Activated CD4-positive, alpha-beta T cell treated with anti-CD3 and anti-CD28 coated beads for 36 hours (primary cell): ENCODE measurements at regions of chr19 and their contacts with region 1.

Region 1: GRCh38 chr19:796692-797527 is at the start of gene PTBP1:
- DNase-seq: peak; percentile 100
- ATAC-seq: peak; percentile 86
- H3K4me3 Mint-ChIP-seq: peak within 1 kb of the TSS; percentile 93
- H3K27ac Mint-ChIP-seq: peak within 1 kb of the TSS; percentile 95
- H3K4me1 Mint-ChIP-seq: peaks cover 25% of the 10 kb centered on the region
- H3K27me3 Mint-ChIP-seq: no peaks in the 10 kb centered on the region
- total RNA-seq, gene PTBP1: 584 to 738 TPM

Region 2: DNA sequence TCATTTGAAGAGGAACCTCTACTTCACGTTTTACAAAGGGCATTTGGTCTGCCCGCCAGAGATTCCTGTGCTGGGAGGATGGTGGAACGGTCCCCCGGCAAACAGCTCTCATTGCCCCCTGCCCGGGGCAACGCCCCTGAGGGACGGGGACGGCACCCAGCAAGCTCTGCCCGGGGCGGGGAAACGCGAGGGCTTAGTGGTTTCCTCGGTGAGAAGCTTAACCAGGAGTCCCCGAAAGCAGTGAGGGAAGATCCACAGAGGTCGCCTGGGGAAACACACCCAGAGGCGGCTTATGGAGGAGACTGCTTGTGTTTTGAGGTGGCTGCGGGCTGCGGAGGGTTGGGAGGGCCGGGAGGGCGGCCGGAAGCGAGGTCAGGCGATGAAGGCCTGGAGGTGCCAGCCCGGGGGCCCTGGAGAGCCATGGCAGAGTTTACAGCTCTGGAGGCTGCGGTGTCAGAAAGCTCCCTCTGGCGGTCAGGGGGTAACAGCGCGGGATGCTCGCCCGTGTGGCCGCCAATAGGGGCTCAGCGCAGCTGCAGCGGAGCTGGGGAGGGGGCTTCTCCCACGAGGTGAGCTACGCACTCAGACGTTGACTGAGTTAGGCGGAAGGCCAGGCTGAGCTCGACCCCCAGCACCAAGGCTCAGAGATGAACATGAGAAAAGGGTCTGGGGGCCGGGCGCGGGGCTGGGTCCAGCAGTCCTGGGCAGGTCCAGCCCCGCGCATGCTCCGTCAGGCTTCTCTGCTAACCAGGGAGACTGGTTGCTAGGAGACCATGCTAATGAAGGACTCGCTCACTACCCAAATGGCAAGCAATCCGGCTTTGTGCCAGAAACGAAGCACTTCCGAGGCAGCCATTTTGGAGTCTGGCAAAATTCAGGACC is 290.3 kb before region 1 on chr19:
- CTCF ChIA-PET with region 1: no interaction called
- POLR2A ChIA-PET with region 1: no interaction called
- intact Hi-C with region 1: loop called in 1 of 2 experiments (anchors 1 kb)
- DNase-seq: peak; percentile 97
- ATAC-seq: peak; percentile 72
- H3K4me3 Mint-ChIP-seq: peak overlapping the region; percentile 95
- H3K27ac Mint-ChIP-seq: peak overlapping the region; percentile 100
- H3K4me1 Mint-ChIP-seq: peaks cover 41% of the 10 kb centered on the region
- H3K27me3 Mint-ChIP-seq: no peaks in the 10 kb centered on the region

Region 3: GRCh38 chr19:639253-640160 is 157.4 kb before region 1 on chr19 and contains the start of gene FGF22:
- CTCF ChIA-PET with region 1: no interaction called
- POLR2A ChIA-PET with region 1: no interaction called
- intact Hi-C with region 1: loop called in 1 of 2 experiments (anchors 1 kb)
- DNase-seq: peak; percentile 98
- ATAC-seq: peak; percentile 97
- H3K4me3 Mint-ChIP-seq: peak within 1 kb of the TSS; percentile 70
- H3K27ac Mint-ChIP-seq: peak within 1 kb of the TSS; percentile 64
- H3K4me1 Mint-ChIP-seq: peaks cover 6% of the 10 kb centered on the region
- H3K27me3 Mint-ChIP-seq: peaks cover 2% of the 10 kb centered on the region
- total RNA-seq, gene FGF22: not detected

Region 4: DNA sequence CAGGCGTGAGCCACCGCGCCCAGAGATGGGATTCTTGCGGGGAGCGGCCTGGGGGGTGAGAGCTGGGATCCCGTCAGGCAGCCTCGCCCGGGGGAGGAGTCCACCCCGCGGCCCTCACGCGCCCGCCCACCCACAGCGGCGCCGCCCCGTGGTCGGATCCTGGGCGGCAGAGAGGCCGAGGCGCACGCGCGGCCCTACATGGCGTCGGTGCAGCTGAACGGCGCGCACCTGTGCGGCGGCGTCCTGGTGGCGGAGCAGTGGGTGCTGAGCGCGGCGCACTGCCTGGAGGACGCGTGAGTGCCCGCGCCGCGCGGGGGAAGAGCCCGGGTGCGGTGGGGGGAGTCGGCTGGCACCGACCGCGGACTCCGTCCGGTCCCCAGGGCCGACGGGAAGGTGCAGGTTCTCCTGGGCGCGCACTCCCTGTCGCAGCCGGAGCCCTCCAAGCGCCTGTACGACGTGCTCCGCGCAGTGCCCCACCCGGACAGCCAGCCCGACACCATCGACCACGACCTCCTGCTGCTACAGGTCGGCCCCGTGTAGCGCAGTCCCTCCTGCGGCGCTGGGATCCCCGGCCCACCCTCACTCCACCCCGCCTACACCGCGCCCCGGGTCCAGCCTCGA is 63.7 kb after region 1 on chr19:
- CTCF ChIA-PET with region 1: no interaction called
- POLR2A ChIA-PET with region 1: no interaction called
- intact Hi-C with region 1: loop called in 1 of 2 experiments (anchors 1 kb)
- DNase-seq: peak; percentile 73
- ATAC-seq: peak; percentile 17
- H3K4me3 Mint-ChIP-seq: no peak overlapping the region
- H3K27ac Mint-ChIP-seq: no peak overlapping the region
- H3K4me1 Mint-ChIP-seq: peaks cover 13% of the 10 kb centered on the region
- H3K27me3 Mint-ChIP-seq: peaks cover 13% of the 10 kb centered on the region

Region 5: GRCh38 chr19:1020868-1021425 is 224.0 kb after region 1 on chr19 and contains the start of gene TMEM259:
- CTCF ChIA-PET with region 1: no interaction called
- POLR2A ChIA-PET with region 1: no interaction called
- intact Hi-C with region 1: loop called in 1 of 2 experiments (anchors 1 kb)
- DNase-seq: peak; percentile 99
- ATAC-seq: peak; percentile 90
- H3K4me3 Mint-ChIP-seq: peak within 1 kb of the TSS; percentile 94
- H3K27ac Mint-ChIP-seq: peak within 1 kb of the TSS; percentile 96
- H3K4me1 Mint-ChIP-seq: peaks cover 35% of the 10 kb centered on the region
- H3K27me3 Mint-ChIP-seq: no peaks in the 10 kb centered on the region
- total RNA-seq, gene TMEM259: 106 to 128 TPM

Region 6: DNA sequence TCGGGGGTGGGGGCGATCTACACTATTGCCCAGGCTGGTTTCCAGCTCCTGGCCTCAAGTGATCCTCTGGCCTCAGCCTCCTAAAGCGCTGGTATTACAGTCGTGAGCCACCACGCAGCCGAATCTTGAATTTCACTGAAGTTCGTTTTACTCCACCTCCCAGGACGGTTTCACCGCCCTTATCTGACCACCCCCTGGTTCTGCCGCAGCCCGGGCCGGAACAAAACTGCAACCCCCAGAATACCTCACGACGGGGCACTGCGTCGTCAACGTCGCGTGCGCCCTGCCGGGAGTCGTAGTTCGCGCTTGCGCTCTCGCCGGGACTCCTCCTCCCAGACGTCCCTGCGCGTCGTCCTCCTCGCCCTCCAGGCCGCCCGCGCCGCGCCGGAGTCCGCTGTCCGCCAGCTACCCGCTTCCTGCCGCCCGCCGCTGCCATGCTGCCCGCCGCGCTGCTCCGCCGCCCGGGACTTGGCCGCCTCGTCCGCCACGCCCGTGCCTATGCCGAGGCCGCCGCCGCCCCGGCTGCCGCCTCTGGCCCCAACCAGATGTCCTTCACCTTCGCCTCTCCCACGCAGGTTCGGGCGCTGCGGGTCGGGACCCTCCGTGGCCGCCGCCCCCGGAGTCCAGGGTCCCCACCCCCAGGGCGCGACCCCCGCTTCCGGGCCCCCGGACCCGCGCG is 444.6 kb after region 1 on chr19 and contains the start of gene ATP5F1D:
- CTCF ChIA-PET with region 1: no interaction called
- POLR2A ChIA-PET with region 1: no interaction called
- intact Hi-C with region 1: loop called in 1 of 2 experiments (anchors 1 kb)
- DNase-seq: peak; percentile 96
- ATAC-seq: peak; percentile 79
- H3K4me3 Mint-ChIP-seq: peak within 1 kb of the TSS; percentile 83
- H3K27ac Mint-ChIP-seq: peak within 1 kb of the TSS; percentile 86
- H3K4me1 Mint-ChIP-seq: peaks cover 38% of the 10 kb centered on the region
- H3K27me3 Mint-ChIP-seq: peaks cover 6% of the 10 kb centered on the region
- total RNA-seq, gene ATP5F1D: 161 to 180 TPM

Region 7: DNA sequence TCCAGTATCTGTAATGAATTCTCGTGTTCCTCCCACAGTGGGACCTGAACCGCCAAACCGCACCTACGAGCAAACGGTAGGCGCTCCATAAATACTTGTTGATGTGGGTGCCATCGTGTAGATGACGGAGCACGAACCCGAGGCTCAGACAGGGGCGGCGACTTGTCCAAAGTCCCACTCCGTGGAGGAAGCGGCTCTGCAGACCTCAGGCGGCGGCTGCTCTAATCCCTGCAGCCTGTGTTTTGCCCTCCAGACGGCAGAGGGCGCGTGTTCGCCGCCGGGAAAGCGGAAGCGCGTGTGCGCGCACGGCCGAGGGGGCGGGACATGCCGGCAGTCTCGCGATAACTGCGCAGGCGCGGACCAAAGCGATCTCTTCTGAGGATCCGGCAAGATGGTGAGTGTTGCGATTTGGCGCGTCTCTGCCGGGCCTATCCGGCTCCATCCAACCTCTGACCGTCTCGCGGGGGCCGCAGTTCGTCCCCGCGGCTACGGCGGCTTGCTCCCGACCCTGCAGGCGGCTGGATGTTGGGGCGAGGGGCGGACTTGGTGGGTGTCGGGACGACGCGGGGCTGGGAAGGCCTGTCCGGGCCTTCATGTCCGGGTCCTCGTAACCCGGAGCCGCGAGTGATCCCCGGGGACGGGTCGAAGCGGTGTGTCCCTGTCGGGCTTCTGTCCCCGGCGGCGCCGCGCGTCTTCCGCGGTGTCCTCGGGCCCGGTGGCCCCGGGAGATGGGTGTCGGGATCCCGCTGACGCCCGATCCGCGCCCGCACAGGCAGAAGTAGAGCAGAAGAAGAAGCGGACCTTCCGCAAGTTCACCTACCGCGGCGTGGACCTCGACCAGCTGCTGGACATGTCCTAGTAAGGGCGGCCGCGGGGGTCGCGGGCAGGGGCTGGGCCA is 641.4 kb after region 1 on chr19 and contains the start of gene RPS15:
- CTCF ChIA-PET with region 1: no interaction called
- POLR2A ChIA-PET with region 1: no interaction called
- intact Hi-C with region 1: loop called in 1 of 2 experiments (anchors 5 kb)
- DNase-seq: peak; percentile 98
- ATAC-seq: peak; percentile 86
- H3K4me3 Mint-ChIP-seq: peak within 1 kb of the TSS; percentile 94
- H3K27ac Mint-ChIP-seq: peak within 1 kb of the TSS; percentile 99
- H3K4me1 Mint-ChIP-seq: peaks cover 34% of the 10 kb centered on the region
- H3K27me3 Mint-ChIP-seq: no peaks in the 10 kb centered on the region
- total RNA-seq, gene RPS15: 1,716 to 1,858 TPM